Caco-2 (cell line): ENCODE measurements at regions of chr19 and their contacts with region 1.

Region 1: GRCh38 chr19:18224525-18225354 is 1.5 kb downstream of the PDE4C start:
- DNase-seq: peak; percentile 97 to 98
- H3K4me3 ChIP-seq: peak overlapping the region; percentile 79
- H3K4me3 Mint-ChIP-seq: peak overlapping the region; percentile 95
- H3K27ac Mint-ChIP-seq: peak overlapping the region; percentile 81
- H3K4me1 ChIP-seq: 0 out of 2 replicates have a peak, but pooled peaks cover 5% of the 10 kb centered on the region
- H3K4me1 Mint-ChIP-seq: peaks cover 10% of the 10 kb centered on the region
- H3K27me3 ChIP-seq: no peaks in the 10 kb centered on the region
- H3K27me3 Mint-ChIP-seq: no peaks in the 10 kb centered on the region
- CTCF ChIP-seq: no peak

Region 2: DNA sequence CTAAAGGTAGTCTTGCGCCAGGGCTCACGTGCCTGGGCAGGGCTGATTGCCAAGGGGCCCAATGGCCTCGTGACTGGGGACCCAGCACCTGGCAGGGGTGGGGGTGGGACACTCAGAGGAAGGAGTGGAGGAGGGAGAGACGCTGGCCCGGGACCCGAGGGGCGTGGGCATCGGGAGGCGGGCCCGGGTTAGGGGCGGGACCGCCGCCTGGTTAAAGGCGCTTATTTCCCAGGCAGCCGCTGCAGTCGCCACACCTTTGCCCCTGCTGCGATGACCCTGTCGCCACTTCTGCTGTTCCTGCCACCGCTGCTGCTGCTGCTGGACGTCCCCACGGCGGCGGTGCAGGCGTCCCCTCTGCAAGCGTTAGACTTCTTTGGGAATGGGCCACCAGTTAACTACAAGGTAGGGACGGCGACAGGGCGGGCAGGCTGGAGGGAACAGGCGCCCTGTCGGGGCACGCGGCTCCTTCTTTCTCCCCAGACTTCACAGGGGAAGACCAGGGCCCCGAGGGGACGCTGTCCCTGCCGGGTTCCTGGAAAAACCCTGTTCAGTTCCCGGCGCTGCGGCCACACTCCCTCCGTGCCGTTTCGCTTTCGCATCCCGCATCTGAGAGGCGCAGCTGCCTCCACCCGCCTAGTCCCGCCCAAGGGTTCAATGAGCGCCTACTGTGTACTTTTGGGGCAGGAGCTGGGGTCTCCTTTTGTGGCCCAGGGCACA is 51.0 kb before region 1 on chr19 and contains the start of gene IFI30:
- CTCF ChIA-PET with region 1: no interaction called
- POLR2A ChIA-PET with region 1: no interaction called
- intact Hi-C with region 1: no loop called
- DNase-seq: peak; percentile 64 to 69
- H3K4me3 ChIP-seq: peak within 1 kb of the TSS; percentile 67
- H3K4me3 Mint-ChIP-seq: peak within 1 kb of the TSS; percentile 76
- H3K27ac Mint-ChIP-seq: no peak within 1 kb of the TSS
- H3K4me1 ChIP-seq: 0 out of 2 replicates have a peak, but pooled peaks cover 4% of the 10 kb centered on the region
- H3K4me1 Mint-ChIP-seq: no peaks in the 10 kb centered on the region
- H3K27me3 ChIP-seq: no peaks in the 10 kb centered on the region
- H3K27me3 Mint-ChIP-seq: no peaks in the 10 kb centered on the region
- CTCF ChIP-seq: no peak
- total RNA-seq, gene IFI30: 38.3 and 39.6 TPM in 2 replicates

Region 3: GRCh38 chr19:18192673-18193387 is 31.9 kb before region 1 on chr19 and contains the start of gene MPV17L2:
- CTCF ChIA-PET with region 1: interaction called, 3 read pairs
- POLR2A ChIA-PET with region 1: interaction called, 15 read pairs
- intact Hi-C with region 1: loop called (anchors 1 kb)
- DNase-seq: peak; percentile 98 to 99
- H3K4me3 ChIP-seq: peak within 1 kb of the TSS; percentile 77
- H3K4me3 Mint-ChIP-seq: peak within 1 kb of the TSS; percentile 76
- H3K27ac Mint-ChIP-seq: peak within 1 kb of the TSS; percentile 69
- H3K4me1 ChIP-seq: peaks cover 4% of the 10 kb centered on the region; the same call in 1 of the 2 replicates
- H3K4me1 Mint-ChIP-seq: no peaks in the 10 kb centered on the region
- H3K27me3 ChIP-seq: no peaks in the 10 kb centered on the region
- H3K27me3 Mint-ChIP-seq: no peaks in the 10 kb centered on the region
- CTCF ChIP-seq: no peak
- total RNA-seq, gene MPV17L2: 14.1 and 16.6 TPM in 2 replicates

Region 4: GRCh38 chr19:18203863-18204393 is 20.8 kb before region 1 on chr19 and contains the start of gene RAB3A:
- CTCF ChIA-PET with region 1: interaction called, 18 read pairs
- POLR2A ChIA-PET with region 1: interaction called, 3 read pairs
- intact Hi-C with region 1: loop called (anchors 2 kb)
- DNase-seq: peak; percentile 99
- H3K4me3 ChIP-seq: peak within 1 kb of the TSS; percentile 90
- H3K4me3 Mint-ChIP-seq: peak within 1 kb of the TSS; percentile 90
- H3K27ac Mint-ChIP-seq: peak within 1 kb of the TSS; percentile 87
- H3K4me1 ChIP-seq: peaks cover 5% of the 10 kb centered on the region; the same call in 1 of the 2 replicates
- H3K4me1 Mint-ChIP-seq: no peaks in the 10 kb centered on the region
- H3K27me3 ChIP-seq: no peaks in the 10 kb centered on the region
- H3K27me3 Mint-ChIP-seq: no peaks in the 10 kb centered on the region
- CTCF ChIP-seq: no peak
- total RNA-seq, gene RAB3A: 2.3 and 3.9 TPM in 2 replicates

Region 5: GRCh38 chr19:18373892-18374629 is 149.3 kb after region 1 on chr19:
- CTCF ChIA-PET with region 1: no interaction called
- POLR2A ChIA-PET with region 1: no interaction called
- intact Hi-C with region 1: no loop called
- DNase-seq: peak; percentile 88 to 95
- H3K4me3 ChIP-seq: no peak overlapping the region
- H3K4me3 Mint-ChIP-seq: peak overlapping the region; percentile 44
- H3K27ac Mint-ChIP-seq: peak overlapping the region; percentile 78
- H3K4me1 ChIP-seq: peaks cover 59% of the 10 kb centered on the region
- H3K4me1 Mint-ChIP-seq: peaks cover 11% of the 10 kb centered on the region
- H3K27me3 ChIP-seq: no peaks in the 10 kb centered on the region
- H3K27me3 Mint-ChIP-seq: no peaks in the 10 kb centered on the region
- CTCF ChIP-seq: no peak